Right ventricle myocardium inferior (tissue), 1 donor: ENCODE measurements at regions of chr3 and their contacts with region 1.

Region 1: DNA sequence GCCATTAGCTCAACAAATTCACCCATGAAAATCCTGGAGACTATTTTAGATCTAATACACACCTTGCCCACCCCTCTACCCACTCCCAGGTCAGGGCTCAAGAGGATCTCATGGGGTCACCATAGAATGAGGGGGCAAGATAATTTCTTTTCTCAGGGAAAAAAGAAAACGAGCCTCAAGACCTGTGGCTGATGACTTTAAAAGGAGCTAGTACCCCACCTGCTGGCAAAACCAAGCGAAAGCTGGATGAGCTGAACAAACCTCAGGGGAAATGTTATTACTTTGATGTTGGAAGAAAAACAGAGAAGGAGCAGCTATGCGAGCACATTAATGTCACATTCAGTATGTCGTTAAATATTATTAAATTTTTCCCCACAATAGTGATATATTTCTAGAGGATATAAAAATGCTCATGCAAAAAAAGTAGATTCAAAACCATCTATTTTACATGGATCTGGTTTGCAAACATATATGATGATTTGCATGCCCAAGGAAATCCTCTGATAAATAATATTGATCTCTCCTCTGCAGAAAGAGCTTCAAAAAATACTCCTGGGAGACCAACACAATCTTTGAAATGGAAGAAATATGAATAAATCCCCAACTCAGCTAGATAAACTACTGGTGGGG is 37.7 kb downstream of the PLD1 start:
- DNase-seq: no peak
- ATAC-seq: no peak

Region 2: GRCh38 chr3:171736556-171736955 is 36.0 kb before region 1 on chr3:
- intact Hi-C with region 1: loop called (anchors 5 kb)
- DNase-seq: no peak
- ATAC-seq: no peak

Region 3: GRCh38 chr3:171753665-171754408 is 18.7 kb before region 1 on chr3:
- intact Hi-C with region 1: loop called (anchors 2 kb)
- DNase-seq: no peak
- ATAC-seq: no peak

Region 4: DNA sequence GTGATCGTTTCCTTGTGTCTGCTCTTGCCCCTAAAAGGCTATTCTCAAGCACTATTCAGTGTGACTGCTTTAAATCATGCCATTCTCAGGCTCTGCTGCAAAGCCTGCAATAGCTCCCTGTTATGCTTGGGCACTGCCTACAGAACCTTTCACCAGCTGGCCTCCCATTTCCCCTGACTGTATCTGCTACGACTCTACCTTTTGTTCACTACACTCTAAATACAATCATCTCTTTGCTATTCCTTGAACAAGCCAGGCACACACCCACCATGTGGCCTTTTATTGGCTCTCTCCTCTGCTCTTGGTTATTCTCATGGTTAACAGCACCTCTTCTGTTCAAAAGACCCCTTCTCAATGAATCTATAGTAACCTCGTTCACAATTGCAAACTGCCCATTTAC is 237.3 kb after region 1 on chr3:
- intact Hi-C with region 1: no loop called
- DNase-seq: no peak
- ATAC-seq: no peak